Natural killer cell (primary cell): ENCODE measurements at regions of chr9 and their contacts with region 1.

Region 1: GRCh38 chr9:71768388-71769174 is at the start of gene CEMIP2:
- DNase-seq: peak; percentile 86 to 93
- ATAC-seq: peak; percentile 82 to 95 (median 86)
- H3K4me3 ChIP-seq: peak within 1 kb of the TSS; percentile 88
- H3K4me3 Mint-ChIP-seq: peak within 1 kb of the TSS; percentile 92
- H3K27ac ChIP-seq: peak within 1 kb of the TSS; percentile 96
- H3K27ac Mint-ChIP-seq: peak within 1 kb of the TSS; percentile 88 to 94
- H3K4me1 ChIP-seq: peaks cover 29% of the 10 kb centered on the region
- H3K4me1 Mint-ChIP-seq: peaks cover 54 to 56% of the 10 kb centered on the region in 2 donors
- H3K27me3 ChIP-seq: no peaks in the 10 kb centered on the region
- H3K27me3 Mint-ChIP-seq: no peaks in the 10 kb centered on the region
- CTCF ChIP-seq: peak; percentile 62
- total RNA-seq, gene CEMIP2: 204 to 326 (median 230) TPM

Region 2: GRCh38 chr9:70639853-70640814 is 1128.4 kb before region 1 on chr9:
- intact Hi-C with region 1: no loop called
- DNase-seq: peak in 1 of 2 donors; percentile 42
- ATAC-seq: peak in 1 of 3 donors; percentile 40
- H3K4me3 ChIP-seq: no peak overlapping the region
- H3K4me3 Mint-ChIP-seq: no peak overlapping the region
- H3K27ac ChIP-seq: no peak overlapping the region
- H3K27ac Mint-ChIP-seq: no peak overlapping the region
- H3K4me1 ChIP-seq: no peaks in the 10 kb centered on the region
- H3K4me1 Mint-ChIP-seq: no peaks in the 10 kb centered on the region
- H3K27me3 ChIP-seq: no peaks in the 10 kb centered on the region
- H3K27me3 Mint-ChIP-seq: peaks cover 3 to 10% of the 10 kb centered on the region in 2 donors
- CTCF ChIP-seq: peak; percentile 20

Region 3: GRCh38 chr9:71716138-71716909 is 52.3 kb before region 1 on chr9:
- intact Hi-C with region 1: loop called (anchors 10 kb)
- DNase-seq: no peak
- ATAC-seq: no peak
- H3K4me3 ChIP-seq: no peak overlapping the region
- H3K4me3 Mint-ChIP-seq: no peak overlapping the region
- H3K27ac ChIP-seq: no peak overlapping the region
- H3K27ac Mint-ChIP-seq: peak overlapping the region; percentile 34 to 42
- H3K4me1 ChIP-seq: no peaks in the 10 kb centered on the region
- H3K4me1 Mint-ChIP-seq: peaks cover 0 to 26% of the 10 kb centered on the region in 2 donors
- H3K27me3 ChIP-seq: no peaks in the 10 kb centered on the region
- H3K27me3 Mint-ChIP-seq: no peaks in the 10 kb centered on the region
- CTCF ChIP-seq: peak; percentile 80

Region 4: DNA sequence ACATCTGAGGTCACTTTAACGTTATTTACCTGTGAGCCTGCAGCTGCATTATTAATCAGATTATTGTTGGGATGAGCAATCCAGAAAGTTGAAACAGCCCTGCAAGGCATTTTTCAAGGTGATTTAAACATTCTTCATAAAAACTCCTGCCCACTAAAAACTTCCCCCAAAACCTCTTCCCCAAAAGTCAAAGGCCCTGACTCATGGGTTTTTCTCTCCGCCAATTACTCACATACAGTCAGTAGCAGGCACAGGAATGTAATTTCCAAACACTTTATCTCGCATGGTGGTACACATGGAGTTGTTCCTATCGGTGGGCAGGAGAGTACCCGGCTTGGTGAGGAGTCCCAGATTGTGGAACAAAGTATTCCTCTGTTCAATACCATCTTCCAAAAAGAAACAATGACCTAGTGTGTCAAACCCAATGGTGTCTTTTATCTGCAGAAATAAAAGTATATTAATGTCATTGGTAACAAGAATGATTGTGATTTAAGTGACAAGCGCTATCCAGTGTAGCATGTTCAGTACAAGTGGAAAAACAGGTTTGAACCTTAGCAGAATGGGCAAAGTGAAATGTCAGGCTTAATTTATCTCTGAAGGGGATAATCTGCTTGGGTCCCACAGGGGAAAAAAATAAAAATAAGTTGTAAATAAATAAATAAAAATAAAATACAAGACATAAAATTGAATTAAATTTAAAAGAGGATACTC is 38.6 kb before region 1 on chr9:
- intact Hi-C with region 1: loop called (anchors 5 kb)
- DNase-seq: no peak
- ATAC-seq: no peak
- H3K4me3 ChIP-seq: no peak overlapping the region
- H3K4me3 Mint-ChIP-seq: no peak overlapping the region
- H3K27ac ChIP-seq: no peak overlapping the region
- H3K27ac Mint-ChIP-seq: peak overlapping the region in 1 of 2 donors; percentile 57
- H3K4me1 ChIP-seq: no peaks in the 10 kb centered on the region
- H3K4me1 Mint-ChIP-seq: peaks cover 7 to 17% of the 10 kb centered on the region in 2 donors
- H3K27me3 ChIP-seq: no peaks in the 10 kb centered on the region
- H3K27me3 Mint-ChIP-seq: no peaks in the 10 kb centered on the region
- CTCF ChIP-seq: no peak

Region 5: GRCh38 chr9:71830929-71831328 is 62.3 kb after region 1 on chr9:
- intact Hi-C with region 1: no loop called
- DNase-seq: no peak
- ATAC-seq: no peak
- H3K4me3 ChIP-seq: no peak overlapping the region
- H3K4me3 Mint-ChIP-seq: no peak overlapping the region
- H3K27ac ChIP-seq: no peak overlapping the region
- H3K27ac Mint-ChIP-seq: no peak overlapping the region
- H3K4me1 ChIP-seq: no peaks in the 10 kb centered on the region
- H3K4me1 Mint-ChIP-seq: peaks cover 0 to 6% of the 10 kb centered on the region in 2 donors
- H3K27me3 ChIP-seq: no peaks in the 10 kb centered on the region
- H3K27me3 Mint-ChIP-seq: peaks cover 0 to 2% of the 10 kb centered on the region in 2 donors
- CTCF ChIP-seq: no peak